Right ventricle myocardium inferior (tissue), 1 donor: ENCODE measurements at regions of chr20 and their contacts with region 1.

Region 1: GRCh38 chr20:39986173-39986904 is 702.7 kb downstream of the MAFB start:
- DNase-seq: peak; percentile 80
- ATAC-seq: peak; percentile 93

Region 2: GRCh38 chr20:39946053-39946810 is 40.1 kb before region 1 on chr20:
- intact Hi-C with region 1: no loop called
- DNase-seq: no peak
- ATAC-seq: no peak

Region 3: GRCh38 chr20:40189621-40190020 is 203.3 kb after region 1 on chr20:
- intact Hi-C with region 1: loop called (anchors 10 kb)
- DNase-seq: no peak
- ATAC-seq: no peak